Uterus (tissue), 4 donors: ENCODE measurements at regions of chr12 and their contacts with region 1.

Region 1: GRCh38 chr12:3135522-3136461 is 58.6 kb downstream of the TSPAN9 start:
- DNase-seq: peak; percentile 50 to 65
- H3K4me3 ChIP-seq: no peak overlapping the region
- H3K27ac ChIP-seq: no peak overlapping the region
- H3K4me1 ChIP-seq: peaks cover 0 to 11% of the 10 kb centered on the region in 2 donors
- H3K27me3 ChIP-seq: no peaks in the 10 kb centered on the region
- CTCF ChIP-seq: peak; percentile 69 to 92 (median 82)
- POLR2A ChIP-seq: no peak

Region 2: GRCh38 chr12:3073438-3074250 is 62.1 kb before region 1 on chr12:
- intact Hi-C with region 1: loop called (anchors 10 kb)
- DNase-seq: peak; percentile 86 to 88
- H3K4me3 ChIP-seq: no peak overlapping the region
- H3K27ac ChIP-seq: no peak overlapping the region
- H3K4me1 ChIP-seq: no peaks in the 10 kb centered on the region
- H3K27me3 ChIP-seq: no peaks in the 10 kb centered on the region
- CTCF ChIP-seq: peak; percentile 89 to 98 (median 95)
- POLR2A ChIP-seq: no peak

Region 3: DNA sequence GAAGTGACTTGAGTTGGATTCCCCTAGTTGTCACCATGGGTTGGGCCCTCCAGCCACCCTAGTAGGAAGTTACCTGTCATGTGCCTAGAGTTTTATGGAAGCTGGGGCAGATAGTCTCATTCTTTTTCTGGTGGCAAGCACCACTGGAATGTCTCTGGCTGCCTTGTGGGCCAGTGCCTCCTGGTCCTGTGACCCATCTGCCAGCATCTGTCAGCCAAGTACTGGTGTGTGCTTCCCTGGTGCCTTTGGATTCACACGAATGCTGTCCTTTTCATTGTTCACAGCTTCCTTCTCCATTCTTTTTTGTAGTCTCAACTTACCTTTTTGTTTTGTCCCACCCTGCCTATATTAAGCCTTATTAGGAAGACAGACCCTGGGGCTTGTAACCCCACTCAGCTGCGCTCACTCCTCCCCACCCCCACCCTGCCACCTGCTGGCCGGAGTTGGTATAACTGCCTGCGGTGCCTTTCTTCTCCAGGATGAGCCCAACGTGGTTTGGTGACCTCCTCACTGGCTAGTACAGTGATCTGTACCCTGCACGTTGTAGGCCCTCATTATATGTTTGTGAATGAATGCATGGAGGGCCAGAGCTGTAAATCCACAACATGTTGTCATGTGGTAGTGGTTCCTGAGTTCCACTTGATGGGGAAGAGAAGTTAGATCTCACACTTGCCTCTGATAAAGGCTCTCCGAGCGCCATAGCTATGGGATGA is 67.1 kb after region 1 on chr12:
- intact Hi-C with region 1: loop called (anchors 5 kb)
- DNase-seq: peak; percentile 67 to 73
- H3K4me3 ChIP-seq: no peak overlapping the region
- H3K27ac ChIP-seq: no peak overlapping the region
- H3K4me1 ChIP-seq: peaks cover 0 to 9% of the 10 kb centered on the region in 2 donors
- H3K27me3 ChIP-seq: no peaks in the 10 kb centered on the region
- CTCF ChIP-seq: peak; percentile 83 to 91 (median 88)
- POLR2A ChIP-seq: peak in 1 of 2 donors; percentile 10

Region 4: GRCh38 chr12:3214572-3215364 is 79.0 kb after region 1 on chr12:
- intact Hi-C with region 1: no loop called
- DNase-seq: no peak
- H3K4me3 ChIP-seq: no peak overlapping the region
- H3K27ac ChIP-seq: no peak overlapping the region
- H3K4me1 ChIP-seq: peaks cover 10 to 14% of the 10 kb centered on the region in 2 donors
- H3K27me3 ChIP-seq: no peaks in the 10 kb centered on the region
- CTCF ChIP-seq: no peak
- POLR2A ChIP-seq: no peak

Region 5: DNA sequence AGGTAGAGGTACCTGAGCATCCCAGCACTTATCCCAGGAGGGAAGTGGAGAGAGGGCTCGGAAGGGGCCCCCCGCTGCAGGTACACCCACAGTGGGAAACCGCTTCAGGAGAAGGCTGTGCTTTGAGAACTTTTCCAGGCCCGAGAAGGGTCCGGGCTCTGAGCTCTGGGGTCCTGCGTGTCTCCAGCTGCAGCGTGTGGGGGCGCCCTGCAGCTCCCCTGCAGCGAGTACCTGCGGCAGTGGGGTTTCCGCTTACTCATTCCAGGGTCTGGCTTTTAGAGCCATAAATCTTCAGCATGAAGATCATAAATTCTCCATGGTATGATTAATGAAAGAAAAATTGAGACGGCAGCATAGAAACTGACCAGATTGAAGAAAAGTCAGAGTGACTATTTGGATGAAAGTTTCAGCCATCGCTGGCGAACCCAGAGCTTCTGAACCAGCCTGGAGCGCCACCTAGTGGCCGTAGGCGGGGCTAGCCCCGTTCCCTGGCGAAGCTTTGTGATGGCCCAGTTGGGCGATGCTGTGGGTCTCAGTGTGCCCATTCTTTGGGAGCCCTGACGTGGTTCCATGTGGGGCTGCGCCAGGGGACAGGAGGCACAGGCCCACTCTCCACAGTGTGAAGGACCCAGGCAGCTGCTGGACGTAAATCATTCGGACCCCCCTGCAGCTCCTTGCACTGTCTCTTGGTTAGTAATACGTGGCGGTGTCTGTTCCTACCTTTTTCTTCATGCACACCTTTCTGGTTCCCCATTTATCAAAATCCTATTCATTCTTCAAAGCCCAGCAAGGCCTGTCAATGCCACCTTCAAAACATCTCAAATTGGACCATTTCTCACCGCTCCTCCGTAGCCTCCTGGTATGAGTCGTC is 139.6 kb after region 1 on chr12:
- intact Hi-C with region 1: loop called (anchors 5 kb)
- DNase-seq: peak; percentile 77 to 82
- H3K4me3 ChIP-seq: no peak overlapping the region
- H3K27ac ChIP-seq: no peak overlapping the region
- H3K4me1 ChIP-seq: no peaks in the 10 kb centered on the region
- H3K27me3 ChIP-seq: no peaks in the 10 kb centered on the region
- CTCF ChIP-seq: peak; percentile 92 to 98 (median 94)
- POLR2A ChIP-seq: no peak

Region 6: GRCh38 chr12:3342056-3342455 is 206.3 kb after region 1 on chr12:
- intact Hi-C with region 1: no loop called
- DNase-seq: no peak
- H3K4me3 ChIP-seq: no peak overlapping the region
- H3K27ac ChIP-seq: no peak overlapping the region
- H3K4me1 ChIP-seq: no peaks in the 10 kb centered on the region
- H3K27me3 ChIP-seq: no peaks in the 10 kb centered on the region
- CTCF ChIP-seq: peak in 1 of 4 experiments; percentile 34
- POLR2A ChIP-seq: no peak